ENCODE measurements at regions of chr13 and their contacts with region 1.

Region 1: DNA sequence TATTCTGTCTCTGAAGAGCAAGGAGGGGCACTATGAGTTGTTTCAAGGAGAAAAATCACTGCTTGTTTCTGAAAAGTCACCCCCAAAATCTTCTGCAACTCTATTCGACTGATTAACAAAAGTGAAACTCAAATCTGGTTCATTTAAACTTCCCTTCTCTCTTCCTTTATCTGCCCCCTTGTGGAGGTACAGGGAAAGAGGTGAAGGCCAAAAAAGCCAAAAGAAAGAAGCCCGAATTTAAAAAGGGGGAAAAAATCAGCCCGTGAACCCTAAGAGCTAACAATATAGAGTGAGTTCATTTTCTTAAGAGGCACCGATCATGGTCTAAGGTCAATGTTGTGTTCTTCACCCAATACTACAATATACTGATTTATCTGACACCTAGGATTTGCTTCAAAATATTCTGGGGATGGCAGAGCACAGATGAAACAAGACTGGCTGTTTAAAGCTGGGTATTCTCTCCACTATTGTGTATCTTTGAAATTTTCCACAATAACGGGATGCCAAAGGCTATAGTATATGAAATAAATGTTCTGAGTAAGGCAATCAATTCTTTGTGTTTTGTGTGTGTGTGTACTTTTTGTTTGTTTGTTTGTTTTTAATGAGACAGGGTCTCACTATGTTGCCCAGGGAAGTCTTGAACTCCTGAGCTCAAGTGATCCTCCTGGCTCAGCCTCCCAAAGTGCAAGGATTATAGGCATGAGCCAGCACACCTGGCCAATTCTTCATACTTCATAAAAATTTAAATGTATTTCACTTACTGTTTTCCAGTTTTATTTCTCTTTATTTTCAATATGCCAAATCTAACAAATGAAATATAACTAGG is 55.0 kb upstream of the EEF1AKMT1 start:
- DNase-seq: peak in 9 of 14 experiments; percentile 4 to 79 (median 25)
- ATAC-seq: peak; percentile 95
- H3K4me3 ChIP-seq: peak overlapping the region; percentile 13
- H3K4me3 Mint-ChIP-seq: peak overlapping the region; percentile 12
- H3K27ac ChIP-seq: no peak overlapping the region
- H3K27ac Mint-ChIP-seq: peak overlapping the region; percentile 48
- H3K4me1 ChIP-seq: no peaks in the 10 kb centered on the region
- H3K4me1 Mint-ChIP-seq: peaks cover 12% of the 10 kb centered on the region
- H3K27me3 ChIP-seq: no peaks in the 10 kb centered on the region
- H3K27me3 Mint-ChIP-seq: no peaks in the 10 kb centered on the region
- CTCF ChIP-seq: peak; percentile 79

Region 2: DNA sequence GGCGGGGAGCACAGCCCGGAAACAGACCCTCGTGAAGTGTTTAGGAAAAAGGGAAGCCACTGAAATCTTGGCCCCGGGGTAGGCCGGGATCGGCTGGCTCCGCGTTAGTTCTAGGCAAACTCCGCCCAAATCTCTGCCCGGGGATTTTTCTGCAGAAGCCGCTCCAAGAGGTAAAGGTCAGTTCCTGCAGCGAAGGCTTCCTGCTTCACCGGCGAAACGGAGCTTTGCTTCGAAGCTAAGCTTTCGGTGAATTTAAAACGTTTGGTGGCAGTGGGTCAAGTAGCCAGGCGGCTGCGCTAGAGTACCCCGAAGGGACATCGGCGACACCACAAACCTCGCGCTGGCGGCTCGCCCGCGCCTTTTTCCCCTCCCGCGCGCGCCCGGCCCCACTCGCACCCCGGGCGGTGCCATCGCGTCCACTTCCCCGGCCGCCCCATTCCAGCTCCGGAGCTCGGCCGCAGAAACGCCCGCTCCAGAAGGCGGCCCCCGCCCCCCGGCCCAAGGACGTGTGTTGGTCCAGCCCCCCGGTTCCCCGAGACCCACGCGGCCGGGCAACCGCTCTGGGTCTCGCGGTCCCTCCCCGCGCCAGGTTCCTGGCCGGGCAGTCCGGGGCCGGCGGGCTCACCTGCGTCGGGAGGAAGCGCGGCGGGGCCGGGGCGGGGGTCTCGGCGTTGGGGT is 636.5 kb before region 1 on chr13:
- CTCF ChIA-PET with region 1: no interaction called
- POLR2A ChIA-PET with region 1: no interaction called
- intact Hi-C with region 1: loop called (anchors 5 to 10 kb)
- DNase-seq: peak in 3 of 14 experiments; percentile 11 to 40 (median 38)
- ATAC-seq: no peak
- H3K4me3 ChIP-seq: peak overlapping the region; percentile 44
- H3K4me3 Mint-ChIP-seq: peak overlapping the region; percentile 75
- H3K27ac ChIP-seq: no peak overlapping the region
- H3K27ac Mint-ChIP-seq: no peak overlapping the region
- H3K4me1 ChIP-seq: peaks cover 28% of the 10 kb centered on the region
- H3K4me1 Mint-ChIP-seq: peaks cover 25% of the 10 kb centered on the region
- H3K27me3 ChIP-seq: peaks cover 47 to 66% of the 10 kb centered on the region in 2 experiments
- H3K27me3 Mint-ChIP-seq: peaks cover 56% of the 10 kb centered on the region
- CTCF ChIP-seq: no peak

Region 3: DNA sequence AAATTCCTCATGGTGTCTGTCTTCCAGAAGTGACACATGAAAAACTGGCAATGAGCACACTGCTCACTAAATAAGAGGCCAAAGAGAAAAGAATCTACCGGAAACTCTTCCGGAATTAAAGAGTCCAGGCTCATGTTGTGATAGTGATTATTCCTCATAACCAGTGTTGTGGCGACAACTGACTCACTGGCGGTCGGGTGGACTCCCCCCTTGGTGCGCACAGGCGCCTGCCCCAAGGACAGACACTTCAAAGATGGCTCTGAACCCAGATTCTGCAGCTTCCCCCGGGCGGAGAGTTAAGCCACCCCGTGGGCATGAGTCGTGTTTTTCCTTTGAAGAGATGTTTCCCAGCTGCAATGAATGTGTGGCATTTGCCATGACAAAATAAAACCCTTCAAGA is 115.0 kb before region 1 on chr13:
- CTCF ChIA-PET with region 1: no interaction called
- POLR2A ChIA-PET with region 1: no interaction called
- intact Hi-C with region 1: loop called (anchors 1 to 2 kb)
- DNase-seq: no peak
- ATAC-seq: no peak
- H3K4me3 ChIP-seq: no peak overlapping the region
- H3K4me3 Mint-ChIP-seq: no peak overlapping the region
- H3K27ac ChIP-seq: no peak overlapping the region
- H3K27ac Mint-ChIP-seq: no peak overlapping the region
- H3K4me1 ChIP-seq: peaks cover 11% of the 10 kb centered on the region
- H3K4me1 Mint-ChIP-seq: peaks cover 11% of the 10 kb centered on the region
- H3K27me3 ChIP-seq: no peaks in the 10 kb centered on the region
- H3K27me3 Mint-ChIP-seq: peaks cover 9% of the 10 kb centered on the region
- CTCF ChIP-seq: no peak